Left ventricle myocardium superior (tissue), 1 donor: ENCODE measurements at regions of chr11 and their contacts with region 1.

Region 1: DNA sequence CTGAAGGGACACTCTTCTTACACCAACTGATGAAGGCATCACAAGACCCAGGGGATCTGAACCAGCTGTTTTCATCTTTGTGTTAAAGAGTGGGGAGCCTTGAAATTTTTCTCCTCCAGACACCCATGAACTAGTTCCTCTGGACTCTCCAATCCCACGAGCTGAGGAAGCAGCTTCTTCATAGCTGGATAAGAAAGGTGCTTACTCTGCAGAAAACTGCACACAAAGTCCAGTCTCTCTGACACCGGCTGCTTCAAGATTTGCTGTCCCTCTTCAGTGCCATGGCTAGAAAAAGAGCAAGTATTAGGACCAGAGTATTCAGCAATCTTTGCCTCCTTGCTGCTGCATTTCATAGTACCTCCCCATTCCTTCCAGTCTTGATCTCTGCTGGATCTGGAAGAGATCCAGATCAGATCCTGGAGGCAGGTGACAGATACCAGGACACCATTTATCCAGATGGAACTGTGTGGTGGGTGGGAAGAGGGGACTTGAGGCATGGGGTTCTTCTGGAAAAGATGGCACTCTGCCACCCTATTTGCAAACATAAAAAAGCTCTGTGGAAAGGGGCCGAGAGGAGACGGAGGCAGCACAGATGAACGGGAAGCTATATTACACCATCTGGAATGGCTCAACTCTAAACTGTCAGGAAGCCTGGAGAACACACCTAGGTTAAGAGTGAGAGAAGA is 25.5 kb downstream of the IL18BP start:
- DNase-seq: no peak
- ATAC-seq: no peak

Region 2: DNA sequence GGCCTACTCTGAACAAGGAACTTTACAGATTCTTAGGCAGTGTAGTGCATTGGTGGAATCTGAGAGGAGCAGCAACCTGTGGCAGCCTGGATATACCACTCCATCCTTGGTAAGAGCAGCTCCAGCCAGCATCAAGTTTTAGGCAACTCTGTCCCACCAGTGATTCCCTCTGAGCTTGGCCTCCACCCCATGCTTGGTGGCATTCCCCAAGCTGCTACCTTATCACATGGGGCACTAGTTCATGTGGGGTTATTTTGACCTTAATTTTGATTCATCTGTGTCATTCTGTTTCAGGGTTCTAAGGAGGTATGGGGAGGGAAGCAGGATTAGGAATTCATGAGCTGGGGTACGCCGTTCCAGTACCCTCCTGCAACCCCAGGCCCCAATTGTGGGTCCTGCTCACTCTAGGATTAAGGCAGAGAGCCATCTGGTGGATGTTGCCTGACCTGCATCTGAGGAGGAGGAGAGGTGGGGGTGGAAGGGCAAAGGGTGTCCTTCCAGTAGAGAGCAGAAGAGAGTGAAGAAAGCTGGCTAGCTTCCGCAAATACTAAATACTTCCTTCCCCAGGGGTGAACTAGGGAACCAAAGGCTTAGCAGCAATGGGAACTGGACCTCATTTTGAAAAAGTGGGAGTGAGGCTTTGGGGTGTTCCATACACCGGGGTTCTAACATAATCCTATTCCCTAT is 66.9 kb after region 1 on chr11:
- intact Hi-C with region 1: loop called (anchors 2 kb)
- DNase-seq: peak; percentile 73
- ATAC-seq: peak; percentile 92

Region 3: GRCh38 chr11:72141066-72141465 is 116.9 kb after region 1 on chr11:
- intact Hi-C with region 1: loop called (anchors 5 kb)
- DNase-seq: no peak
- ATAC-seq: no peak

Region 4: GRCh38 chr11:72160319-72160718 is 136.1 kb after region 1 on chr11:
- intact Hi-C with region 1: no loop called
- DNase-seq: no peak
- ATAC-seq: no peak